Body of pancreas (tissue), 4 donors: ENCODE measurements at regions of chrX and their contacts with region 1.

Region 1: DNA sequence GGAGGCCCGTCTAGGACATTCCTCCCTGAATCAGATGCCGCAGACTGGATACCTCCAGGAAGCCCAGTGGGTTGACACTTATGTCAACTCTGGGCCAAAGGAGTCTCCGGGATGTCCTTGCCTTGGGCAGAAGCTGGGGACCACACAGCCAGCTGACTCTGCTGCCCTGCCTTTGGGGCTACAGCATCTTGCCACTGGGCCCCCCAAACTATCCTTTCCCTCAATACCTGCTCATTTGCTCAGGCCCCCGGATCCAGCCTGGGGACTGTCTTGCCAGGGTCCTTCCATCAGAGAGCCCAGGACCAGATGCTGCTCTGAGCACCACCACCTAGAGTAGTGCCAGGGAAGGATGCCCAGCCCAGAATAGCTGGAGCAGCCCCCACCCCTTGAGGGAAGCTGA is 19.0 kb downstream of the RAB33A start:
- DNase-seq: no peak
- ATAC-seq: no peak
- H3K4me3 ChIP-seq: no peak overlapping the region
- H3K27ac ChIP-seq: no peak overlapping the region
- H3K4me1 ChIP-seq: no peaks in the 10 kb centered on the region
- H3K27me3 ChIP-seq: no peaks in the 10 kb centered on the region
- CTCF ChIP-seq: no peak
- POLR2A ChIP-seq: no peak

Region 2: GRCh38 chrX:130079824-130080406 is 110.9 kb before region 1 on chrX:
- intact Hi-C with region 1: loop called (anchors 5 kb)
- DNase-seq: peak; percentile 61 to 73 (median 64)
- ATAC-seq: peak; percentile 58
- H3K4me3 ChIP-seq: no peak overlapping the region
- H3K27ac ChIP-seq: no peak overlapping the region
- H3K4me1 ChIP-seq: no peaks in the 10 kb centered on the region
- H3K27me3 ChIP-seq: no peaks in the 10 kb centered on the region
- CTCF ChIP-seq: peak; percentile 49 to 73 (median 63)
- POLR2A ChIP-seq: no peak

Region 3: GRCh38 chrX:130637591-130637990 is 446.8 kb after region 1 on chrX:
- intact Hi-C with region 1: no loop called
- DNase-seq: no peak
- ATAC-seq: no peak
- H3K4me3 ChIP-seq: no peak overlapping the region
- H3K27ac ChIP-seq: no peak overlapping the region
- H3K4me1 ChIP-seq: no peaks in the 10 kb centered on the region
- H3K27me3 ChIP-seq: no peaks in the 10 kb centered on the region
- CTCF ChIP-seq: no peak
- POLR2A ChIP-seq: no peak